ENCODE measurements at regions of chr22 and their contacts with region 1.

Region 1: DNA sequence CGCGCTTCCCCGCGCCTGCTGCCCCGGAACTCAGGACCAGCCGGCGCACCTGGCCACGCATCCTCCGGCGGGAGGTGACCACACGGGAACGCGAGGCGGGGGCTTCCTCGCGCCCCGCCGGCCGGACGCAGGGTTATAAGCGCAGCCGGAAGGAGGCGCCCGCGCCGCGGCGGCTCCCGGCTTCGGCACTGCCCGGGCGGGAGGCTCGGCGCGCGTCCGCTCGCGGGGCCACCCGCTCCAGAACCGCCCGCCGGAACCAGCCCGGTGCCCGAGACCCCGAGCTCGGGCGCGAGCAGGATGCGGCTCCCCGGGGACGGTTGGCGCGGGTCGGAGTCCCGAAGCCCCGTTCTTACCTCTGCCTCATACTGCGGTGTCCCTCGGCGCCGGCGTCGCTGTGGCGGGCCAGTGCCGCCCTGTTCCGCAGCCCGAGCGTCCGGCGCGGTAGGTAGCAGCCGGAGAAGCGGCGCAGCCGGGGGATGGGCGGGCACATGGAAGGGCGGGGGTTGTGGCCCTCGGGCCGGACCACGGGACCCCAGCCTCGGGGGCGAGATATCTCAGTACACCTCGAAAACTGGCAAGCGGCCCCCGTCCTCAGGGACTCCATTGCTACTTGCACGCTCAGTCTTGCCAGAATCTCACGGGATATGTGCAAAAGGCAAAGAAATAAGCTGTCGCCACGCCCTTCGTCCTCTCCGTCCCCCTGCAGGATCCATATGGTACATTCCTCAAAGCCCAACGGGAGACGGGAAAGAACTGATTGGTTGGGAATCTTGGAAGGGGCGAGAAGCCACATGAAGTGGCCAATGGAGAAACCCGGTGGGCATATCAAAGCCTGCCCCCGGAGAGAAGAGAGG is 23.1 kb downstream of the MICAL3 start:
- DNase-seq: peak; percentile 90 to 97 (median 94)
- H3K4me3 ChIP-seq: peak overlapping the region; percentile 8 to 98 (median 46)
- H3K27ac ChIP-seq: peak overlapping the region; percentile 40 to 98 (median 98)
- H3K4me1 ChIP-seq: peaks cover 7 to 21% of the 10 kb centered on the region in 2 donors
- H3K27me3 ChIP-seq: no peaks in the 10 kb centered on the region
- CTCF ChIP-seq: peak in 4 of 6 experiments; percentile 50 to 62 (median 58)
- POLR2A ChIP-seq: peak; percentile 72 to 90

Region 2: DNA sequence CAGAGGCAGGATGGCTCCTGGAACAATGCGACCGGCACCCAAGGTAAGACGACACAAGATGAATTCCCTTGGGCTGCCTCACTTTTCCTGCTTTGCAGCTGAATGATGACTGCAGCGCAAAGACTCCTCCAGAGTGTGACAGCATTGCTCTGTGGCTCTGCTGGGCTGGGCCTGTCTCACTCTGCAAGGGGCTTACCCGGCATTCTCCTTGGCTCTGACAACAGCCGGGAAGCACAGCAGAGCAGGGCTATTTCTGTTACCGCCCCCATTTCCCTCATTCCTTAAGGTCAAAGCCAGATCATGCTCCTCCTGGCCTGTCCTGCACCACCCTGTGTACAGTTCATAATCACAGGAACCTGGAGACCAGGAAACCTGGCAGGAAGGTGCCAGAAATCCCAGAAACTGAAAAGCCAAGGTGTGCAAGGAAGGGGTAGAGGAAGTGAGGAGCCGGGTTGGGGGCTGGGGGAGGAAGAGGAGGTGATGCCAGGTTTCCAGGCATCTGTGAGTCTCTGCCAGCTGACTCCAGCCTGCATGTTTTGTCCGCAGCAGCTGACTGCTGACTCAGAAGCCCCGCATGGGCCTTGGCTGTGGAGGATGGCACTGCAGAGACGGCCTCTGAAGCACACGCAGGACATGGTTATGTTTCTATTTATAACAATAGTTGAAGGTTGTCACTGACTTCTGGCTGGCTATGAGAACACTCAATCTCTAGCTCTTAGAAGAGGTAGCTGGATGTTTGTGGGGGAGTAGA is 90.5 kb before region 1 on chr22:
- intact Hi-C with region 1: loop called in 1 of 2 experiments (anchors 10 kb)
- DNase-seq: peak; percentile 90 to 98 (median 96)
- H3K4me3 ChIP-seq: peak overlapping the region in 1 of 4 donors; percentile 3
- H3K27ac ChIP-seq: peak overlapping the region; percentile 77 to 94 (median 88)
- H3K4me1 ChIP-seq: peaks cover 28 to 40% of the 10 kb centered on the region in 2 donors
- H3K27me3 ChIP-seq: no peaks in the 10 kb centered on the region
- CTCF ChIP-seq: peak in 4 of 6 experiments; percentile 29 to 45 (median 36)
- POLR2A ChIP-seq: peak in 1 of 2 donors; percentile 65

Region 3: DNA sequence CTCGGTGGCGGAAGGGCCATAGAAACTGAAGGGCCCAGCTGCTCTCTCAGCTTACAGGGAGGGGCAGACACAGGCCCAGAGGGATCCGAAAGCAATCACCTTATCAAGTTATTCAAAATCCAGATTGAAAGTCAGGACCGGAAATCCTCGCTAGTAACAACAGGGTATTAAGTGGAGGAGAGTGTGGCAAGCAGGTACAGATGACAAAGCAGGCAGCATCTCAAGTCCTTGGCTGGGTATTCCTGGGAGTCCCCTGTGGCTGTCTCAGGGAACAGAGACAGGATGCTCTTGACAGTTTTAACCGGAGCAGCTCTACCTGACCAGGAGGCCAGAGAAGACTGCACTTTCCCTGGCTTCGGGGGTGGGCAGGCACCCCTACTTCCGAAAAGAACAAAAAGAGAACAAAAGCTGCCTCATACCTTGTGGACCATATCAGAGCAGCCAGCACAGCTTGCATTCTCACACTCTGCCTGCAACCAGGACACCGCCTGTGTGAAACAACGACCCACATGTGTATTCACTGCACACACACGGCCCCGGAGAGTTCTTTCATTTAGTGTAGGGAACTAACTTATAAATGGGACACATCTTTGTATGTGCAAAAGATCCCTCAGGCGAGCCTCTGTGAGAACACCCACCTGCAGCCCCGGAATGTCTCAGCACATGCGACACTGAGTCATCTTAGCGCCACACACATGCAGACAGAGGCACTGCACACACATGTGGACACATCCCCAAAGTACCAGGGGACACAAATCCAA is 55.2 kb before region 1 on chr22:
- intact Hi-C with region 1: no loop called
- DNase-seq: no peak
- H3K4me3 ChIP-seq: no peak overlapping the region
- H3K27ac ChIP-seq: peak overlapping the region in 3 of 5 donors; percentile 55 to 74 (median 71)
- H3K4me1 ChIP-seq: peaks cover 41 to 46% of the 10 kb centered on the region in 2 donors
- H3K27me3 ChIP-seq: no peaks in the 10 kb centered on the region
- CTCF ChIP-seq: no peak
- POLR2A ChIP-seq: no peak

Region 4: GRCh38 chr22:17969701-17970113 is 31.6 kb before region 1 on chr22:
- intact Hi-C with region 1: loop called in 1 of 2 experiments (anchors 5 kb)
- DNase-seq: peak in 6 of 7 donors; percentile 55 to 68 (median 62)
- H3K4me3 ChIP-seq: no peak overlapping the region
- H3K27ac ChIP-seq: peak overlapping the region in 4 of 5 donors; percentile 52 to 87 (median 68)
- H3K4me1 ChIP-seq: peaks cover 34 to 42% of the 10 kb centered on the region in 2 donors
- H3K27me3 ChIP-seq: no peaks in the 10 kb centered on the region
- CTCF ChIP-seq: no peak
- POLR2A ChIP-seq: no peak

Region 5: DNA sequence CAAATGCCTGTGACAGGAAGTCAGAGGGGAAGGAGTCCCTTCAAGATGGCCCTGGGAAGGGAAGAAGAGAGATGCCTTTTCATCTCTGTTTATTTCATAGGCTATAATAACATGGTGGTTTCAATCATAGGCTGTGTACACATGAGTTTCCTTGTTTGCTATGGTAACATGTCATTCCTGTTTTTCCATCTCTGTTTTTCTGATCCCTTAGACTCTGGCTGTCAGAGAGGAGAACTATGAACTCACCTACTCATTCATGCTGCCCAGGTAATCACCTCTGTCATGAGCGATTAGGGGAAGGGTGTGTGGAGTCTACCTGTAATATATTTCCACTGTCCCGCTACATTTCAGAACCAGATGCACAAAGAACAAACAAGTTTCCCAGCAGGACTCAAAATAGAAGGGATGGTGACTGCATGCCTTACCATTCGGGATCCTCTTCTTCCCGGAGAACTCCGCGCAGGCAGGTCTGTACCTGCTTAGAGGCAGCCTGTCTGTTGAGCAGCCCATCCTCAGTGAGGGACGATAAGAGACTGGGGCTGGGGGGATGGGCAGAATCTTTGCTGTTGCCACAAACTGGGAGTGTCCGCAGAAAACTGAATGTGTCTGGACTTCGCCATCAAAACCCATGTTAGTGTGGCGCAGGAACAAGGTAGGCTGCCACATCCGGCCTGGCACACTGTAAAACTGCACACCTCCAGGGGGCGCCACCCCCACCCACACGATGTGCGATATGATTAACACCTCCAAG is 69.5 kb after region 1 on chr22:
- intact Hi-C with region 1: loop called in 1 of 2 experiments (anchors 5 kb)
- DNase-seq: peak in 1 of 7 donors; percentile 13
- H3K4me3 ChIP-seq: no peak overlapping the region
- H3K27ac ChIP-seq: no peak overlapping the region
- H3K4me1 ChIP-seq: peaks cover 0 to 5% of the 10 kb centered on the region in 2 donors
- H3K27me3 ChIP-seq: no peaks in the 10 kb centered on the region
- CTCF ChIP-seq: no peak
- POLR2A ChIP-seq: no peak

Region 6: GRCh38 chr22:18110194-18110953 is 109.1 kb after region 1 on chr22 and contains the start of gene TUBA8:
- intact Hi-C with region 1: no loop called
- DNase-seq: peak in 6 of 7 donors; percentile 40 to 62 (median 52)
- H3K4me3 ChIP-seq: peak within 1 kb of the TSS in 2 of 4 donors; percentile 49 to 59
- H3K27ac ChIP-seq: peak within 1 kb of the TSS in 1 of 5 donors; percentile 3
- H3K4me1 ChIP-seq: peaks cover 9 to 21% of the 10 kb centered on the region in 2 donors
- H3K27me3 ChIP-seq: no peaks in the 10 kb centered on the region
- CTCF ChIP-seq: no peak
- POLR2A ChIP-seq: peak in 1 of 2 donors; percentile 13
- total RNA-seq, gene TUBA8: 0.65 to 2.4 (median 1.4) TPM